ENCODE measurements at regions of chrX and their contacts with region 1.

Region 1: GRCh38 chrX:57821703-57822375 is 88.4 kb downstream of the ZXDA start:
- DNase-seq: peak in 2 of 10 donors; percentile 2 to 29

Region 2: GRCh38 chrX:57918750-57919436 is 97.1 kb after region 1 on chrX:
- intact Hi-C with region 1: loop called (anchors 2 kb)
- DNase-seq: peak in 1 of 10 donors; percentile 66

Region 3: DNA sequence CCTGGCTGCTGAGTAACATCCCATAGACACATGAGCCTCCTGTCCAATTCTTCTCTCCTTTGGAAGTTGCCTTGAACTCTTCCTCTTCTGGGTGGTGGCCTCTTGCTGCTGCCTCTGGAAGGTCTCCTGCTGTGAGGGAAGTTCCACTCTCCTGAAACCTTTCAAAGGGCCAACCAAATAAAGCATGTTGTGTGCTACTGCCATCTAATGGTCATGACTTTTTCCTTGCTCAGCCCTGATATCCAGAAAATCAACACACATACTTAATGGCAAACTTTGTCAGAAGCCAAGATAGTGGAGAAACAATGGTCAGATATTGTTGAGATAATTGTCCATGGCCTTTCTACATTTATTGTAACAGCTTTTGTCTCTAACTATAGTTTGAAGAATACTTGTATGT is 107.5 kb after region 1 on chrX:
- intact Hi-C with region 1: loop called (anchors 1 kb)
- DNase-seq: no peak

Region 4: DNA sequence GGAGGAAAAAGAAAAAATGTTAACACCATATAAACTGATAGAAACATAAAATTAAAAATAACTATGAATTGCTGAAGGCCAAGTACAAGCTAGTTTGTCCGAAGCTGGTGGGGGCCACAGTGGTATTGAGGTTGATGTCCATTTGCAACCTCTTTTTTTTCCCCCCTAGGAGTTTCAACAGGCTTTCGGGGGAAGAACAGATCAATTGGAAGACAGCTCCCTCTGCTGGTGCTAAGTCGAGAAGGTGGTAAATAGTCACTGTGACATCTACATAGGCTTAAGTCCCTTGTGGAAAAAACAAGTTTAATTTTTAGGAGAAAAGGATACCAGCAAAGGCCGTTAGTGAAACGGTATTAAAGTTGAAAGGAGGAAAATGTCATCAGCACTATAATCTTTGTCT is 204.1 kb after region 1 on chrX:
- intact Hi-C with region 1: loop called (anchors 2 kb)
- DNase-seq: peak in 4 of 10 donors; percentile 9 to 43 (median 18)

Measured in posterior cingulate gyrus (tissue), 11 donors.